Activated CD4-positive, alpha-beta T cell treated with anti-CD3 and anti-CD28 coated beads, Interleukin-2, amount 10 ng/mL, durations not matched to agents 24 days and 14 days (primary cell): ENCODE measurements at regions of chr14 and their contacts with region 1.

Region 1: GRCh38 chr14:60753264-60754119 is 18.9 kb downstream of the MNAT1 start:
- DNase-seq: peak; percentile 92
- H3K4me3 Mint-ChIP-seq: peak overlapping the region; percentile 69
- H3K27ac Mint-ChIP-seq: peak overlapping the region; percentile 90
- H3K4me1 Mint-ChIP-seq: peaks cover 49% of the 10 kb centered on the region
- H3K27me3 Mint-ChIP-seq: peaks cover 3% of the 10 kb centered on the region

Region 2: GRCh38 chr14:60331201-60332045 is 422.1 kb before region 1 on chr14:
- intact Hi-C with region 1: loop called (anchors 10 kb)
- DNase-seq: peak; percentile 92
- H3K4me3 Mint-ChIP-seq: peak overlapping the region; percentile 97
- H3K27ac Mint-ChIP-seq: peak overlapping the region; percentile 95
- H3K4me1 Mint-ChIP-seq: peaks cover 32% of the 10 kb centered on the region
- H3K27me3 Mint-ChIP-seq: peaks cover 42% of the 10 kb centered on the region

Region 3: DNA sequence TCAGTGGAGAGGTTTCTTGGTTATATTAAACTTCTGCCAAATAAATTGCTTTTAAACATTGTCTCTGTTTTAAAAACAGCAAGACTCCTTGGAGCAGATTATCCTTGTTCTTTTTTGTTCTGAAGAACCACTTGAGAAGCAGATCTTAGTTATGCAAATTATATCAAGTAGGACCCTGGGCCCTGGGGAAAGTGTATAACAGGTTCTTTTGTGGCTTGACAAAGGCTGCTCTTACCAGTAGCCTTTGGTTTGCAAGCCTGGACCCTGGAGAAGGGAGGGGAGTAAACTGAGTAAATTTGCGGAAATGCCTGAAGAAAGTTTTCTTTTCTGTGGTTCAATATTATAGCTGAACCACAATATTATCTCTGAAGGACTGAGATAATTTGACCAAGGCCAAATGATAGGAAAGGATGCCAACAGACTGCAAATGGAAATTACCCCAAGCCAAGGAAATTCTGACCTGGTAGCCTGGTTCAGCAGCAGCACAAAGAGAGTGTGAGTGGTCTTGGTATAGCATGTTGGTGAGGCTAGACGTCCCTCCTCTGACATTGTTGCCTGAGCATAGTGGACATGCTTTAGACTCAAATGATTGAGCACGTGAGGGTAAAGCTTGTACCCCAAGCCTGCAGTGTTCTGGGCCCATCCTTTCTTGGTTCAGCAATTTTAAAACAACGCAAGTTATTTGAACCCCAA is 73.8 kb before region 1 on chr14:
- intact Hi-C with region 1: no loop called
- DNase-seq: no peak
- H3K4me3 Mint-ChIP-seq: no peak overlapping the region
- H3K27ac Mint-ChIP-seq: no peak overlapping the region
- H3K4me1 Mint-ChIP-seq: no peaks in the 10 kb centered on the region
- H3K27me3 Mint-ChIP-seq: peaks cover 9% of the 10 kb centered on the region

Region 4: GRCh38 chr14:60734465-60735242 is 18.8 kb before region 1 on chr14 and contains the start of gene MNAT1:
- intact Hi-C with region 1: loop called (anchors 2 kb)
- DNase-seq: peak; percentile 93
- H3K4me3 Mint-ChIP-seq: peak within 1 kb of the TSS; percentile 100
- H3K27ac Mint-ChIP-seq: peak within 1 kb of the TSS; percentile 88
- H3K4me1 Mint-ChIP-seq: peaks cover 16% of the 10 kb centered on the region
- H3K27me3 Mint-ChIP-seq: peaks cover 35% of the 10 kb centered on the region
- total RNA-seq, gene MNAT1: 42.6 and 45.0 TPM in 2 replicates

Region 5: GRCh38 chr14:60945984-60946383 is 192.5 kb after region 1 on chr14:
- intact Hi-C with region 1: loop called (anchors 5 kb)
- DNase-seq: no peak
- H3K4me3 Mint-ChIP-seq: no peak overlapping the region
- H3K27ac Mint-ChIP-seq: peak overlapping the region; percentile 22
- H3K4me1 Mint-ChIP-seq: peaks cover 9% of the 10 kb centered on the region
- H3K27me3 Mint-ChIP-seq: no peaks in the 10 kb centered on the region

Region 6: DNA sequence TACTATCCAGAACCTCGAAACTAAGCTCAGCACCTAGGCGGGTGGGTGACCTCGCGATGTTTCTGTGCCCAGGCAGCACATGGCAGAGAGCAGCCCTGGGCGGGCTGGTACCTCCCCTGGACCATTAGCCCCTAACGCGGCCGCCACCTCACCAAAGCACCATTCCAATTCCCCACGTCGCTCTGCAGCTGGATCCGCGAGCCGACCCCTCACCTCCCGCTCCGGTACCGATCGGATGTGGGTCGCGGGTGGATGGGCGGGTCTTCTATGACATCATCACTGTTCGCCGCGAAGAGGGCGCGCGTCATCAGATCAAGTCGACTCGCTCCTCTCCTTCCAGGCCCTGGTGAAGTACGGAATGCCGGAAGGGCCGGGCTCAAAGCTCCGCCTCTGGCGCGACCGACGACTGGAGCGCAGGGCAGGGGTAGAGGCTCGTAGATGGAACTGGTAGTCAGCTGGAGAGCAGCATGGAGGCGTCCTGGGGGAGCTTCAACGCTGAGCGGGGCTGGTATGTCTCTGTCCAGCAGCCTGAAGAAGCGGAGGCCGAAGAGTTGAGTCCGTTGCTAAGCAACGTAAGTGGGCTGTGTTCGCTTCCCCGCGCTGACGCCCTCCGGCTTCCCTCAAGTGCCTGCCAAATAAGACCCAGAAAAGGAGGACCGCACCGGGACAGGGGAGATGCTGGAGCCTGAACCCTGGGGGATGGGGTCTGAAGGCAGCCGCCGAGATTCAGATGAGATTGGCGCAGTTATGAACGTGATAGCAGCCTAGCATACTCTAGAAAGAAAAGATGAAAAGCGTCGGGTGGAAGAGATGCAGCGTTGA is 227.5 kb after region 1 on chr14 and contains the starts of genes SLC38A6 and TRMT5:
- intact Hi-C with region 1: loop called (anchors 1 kb)
- DNase-seq: peak; percentile 98
- H3K4me3 Mint-ChIP-seq: no peak within 1 kb of the TSS
- H3K27ac Mint-ChIP-seq: no peak within 1 kb of the TSS
- H3K4me1 Mint-ChIP-seq: peaks cover 21% of the 10 kb centered on the region
- H3K27me3 Mint-ChIP-seq: no peaks in the 10 kb centered on the region
- total RNA-seq, gene SLC38A6: 4.7 and 5.9 TPM in 2 replicates
- total RNA-seq, gene TRMT5: 16.1 and 18.0 TPM in 2 replicates

Region 7: DNA sequence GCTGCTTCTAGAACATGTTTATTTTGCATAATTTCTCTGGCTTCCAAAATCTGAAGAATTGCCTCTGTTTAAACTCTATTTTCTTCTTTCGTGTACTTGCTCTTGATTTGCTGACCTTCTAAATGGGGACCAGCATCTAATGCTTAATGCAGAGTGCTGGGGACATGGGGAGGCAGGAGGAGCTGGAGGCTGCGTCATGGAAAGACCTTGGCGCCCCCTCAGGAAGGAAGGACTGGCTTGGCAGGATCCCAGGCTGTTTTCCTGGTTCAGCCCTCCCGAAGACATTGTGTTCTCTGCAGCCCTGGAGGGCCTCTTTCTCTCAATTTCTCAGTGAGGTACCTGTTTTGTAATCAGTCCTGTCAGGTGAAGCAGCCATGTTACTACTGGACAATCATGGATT is 573.4 kb after region 1 on chr14:
- intact Hi-C with region 1: loop called (anchors 10 kb)
- DNase-seq: peak; percentile 69
- H3K4me3 Mint-ChIP-seq: peak overlapping the region; percentile 87
- H3K27ac Mint-ChIP-seq: peak overlapping the region; percentile 90
- H3K4me1 Mint-ChIP-seq: peaks cover 59% of the 10 kb centered on the region
- H3K27me3 Mint-ChIP-seq: no peaks in the 10 kb centered on the region